A549 (cell line): ENCODE measurements at regions of chr6 and their contacts with region 1.

Region 1: GRCh38 chr6:112188906-112189305 is 65.5 kb downstream of the LAMA4 start:
- DNase-seq: no peak
- ATAC-seq: no peak
- H3K4me3 ChIP-seq: no peak overlapping the region
- H3K27ac ChIP-seq: no peak overlapping the region
- H3K4me1 ChIP-seq: no peaks in the 10 kb centered on the region
- CTCF ChIP-seq: no peak
- EP300 ChIP-seq: no peak
- POLR2A ChIP-seq: no peak
- RAD21 ChIP-seq: no peak

Region 2: DNA sequence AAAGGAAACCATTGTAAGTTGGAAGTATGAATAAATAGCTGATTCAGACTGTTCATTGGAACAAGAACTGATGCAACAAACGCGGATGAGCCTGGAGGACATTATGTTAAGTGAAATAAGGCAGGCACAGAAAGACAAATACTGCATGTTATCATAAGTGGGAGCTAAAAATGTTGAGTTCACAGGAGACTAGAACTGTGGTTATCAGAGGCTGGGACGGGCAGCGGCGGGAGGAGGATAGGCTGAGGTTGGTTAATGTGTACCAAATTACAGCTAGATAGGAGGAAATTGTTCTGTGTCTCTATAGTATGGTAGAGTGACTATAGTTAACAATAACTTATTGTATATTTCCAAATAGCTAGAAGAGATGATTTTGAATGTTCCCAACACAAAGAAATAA is 60.7 kb before region 1 on chr6:
- CTCF ChIA-PET with region 1: no interaction called
- POLR2A ChIA-PET with region 1: no interaction called
- DNase-seq: no peak
- ATAC-seq: no peak
- H3K4me3 ChIP-seq: no peak overlapping the region
- H3K27ac ChIP-seq: no peak overlapping the region
- H3K4me1 ChIP-seq: no peaks in the 10 kb centered on the region
- CTCF ChIP-seq: no peak
- EP300 ChIP-seq: no peak
- POLR2A ChIP-seq: no peak
- RAD21 ChIP-seq: no peak

Region 3: DNA sequence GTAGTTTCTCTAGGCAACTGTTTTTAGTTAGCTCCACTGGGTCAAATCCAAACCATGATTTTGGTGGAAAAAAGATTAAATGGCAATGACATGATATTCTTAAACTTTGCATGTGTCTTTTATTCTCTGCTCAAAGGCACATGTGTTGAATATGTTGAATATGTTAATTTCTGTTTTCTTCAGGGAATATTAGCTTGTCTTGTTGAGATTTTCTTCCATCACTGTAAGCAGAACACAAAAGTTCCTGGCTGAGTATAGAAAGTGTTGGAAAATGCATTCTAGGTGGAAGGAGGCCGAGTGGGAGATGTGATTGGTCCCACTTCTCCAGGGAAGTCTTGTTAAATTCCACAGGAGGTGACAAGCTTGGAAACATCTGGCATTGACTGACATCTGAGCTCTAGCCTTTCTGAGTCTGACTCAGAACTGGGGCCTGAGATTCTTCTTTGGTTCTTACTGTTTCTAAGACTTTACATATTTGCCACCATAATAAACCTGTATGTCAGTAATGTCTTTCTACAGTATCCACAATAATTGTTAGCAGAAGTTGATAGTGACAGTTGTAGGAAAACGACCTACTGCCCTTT is 15.6 kb before region 1 on chr6:
- CTCF ChIA-PET with region 1: no interaction called
- POLR2A ChIA-PET with region 1: no interaction called
- DNase-seq: no peak
- ATAC-seq: no peak
- H3K4me3 ChIP-seq: no peak overlapping the region
- H3K27ac ChIP-seq: no peak overlapping the region
- H3K4me1 ChIP-seq: no peaks in the 10 kb centered on the region
- CTCF ChIP-seq: no peak
- EP300 ChIP-seq: no peak
- POLR2A ChIP-seq: no peak
- RAD21 ChIP-seq: no peak

Region 4: GRCh38 chr6:112311950-112312547 is 123.1 kb after region 1 on chr6:
- CTCF ChIA-PET with region 1: interaction called, 12 read pairs
- POLR2A ChIA-PET with region 1: no interaction called
- DNase-seq: peak in 1 of 2 experiments; percentile 7
- ATAC-seq: no peak
- H3K4me3 ChIP-seq: no peak overlapping the region
- H3K27ac ChIP-seq: peak overlapping the region in 1 of 2 experiments; percentile 56; a peak in 2 of 6 replicates
- H3K4me1 ChIP-seq: no peaks in the 10 kb centered on the region
- CTCF ChIP-seq: peak; percentile 69
- EP300 ChIP-seq: no peak
- POLR2A ChIP-seq: no peak
- RAD21 ChIP-seq: peak; percentile 75 to 80